ENCODE measurements at regions of chr6 and their contacts with region 1.

Region 1: DNA sequence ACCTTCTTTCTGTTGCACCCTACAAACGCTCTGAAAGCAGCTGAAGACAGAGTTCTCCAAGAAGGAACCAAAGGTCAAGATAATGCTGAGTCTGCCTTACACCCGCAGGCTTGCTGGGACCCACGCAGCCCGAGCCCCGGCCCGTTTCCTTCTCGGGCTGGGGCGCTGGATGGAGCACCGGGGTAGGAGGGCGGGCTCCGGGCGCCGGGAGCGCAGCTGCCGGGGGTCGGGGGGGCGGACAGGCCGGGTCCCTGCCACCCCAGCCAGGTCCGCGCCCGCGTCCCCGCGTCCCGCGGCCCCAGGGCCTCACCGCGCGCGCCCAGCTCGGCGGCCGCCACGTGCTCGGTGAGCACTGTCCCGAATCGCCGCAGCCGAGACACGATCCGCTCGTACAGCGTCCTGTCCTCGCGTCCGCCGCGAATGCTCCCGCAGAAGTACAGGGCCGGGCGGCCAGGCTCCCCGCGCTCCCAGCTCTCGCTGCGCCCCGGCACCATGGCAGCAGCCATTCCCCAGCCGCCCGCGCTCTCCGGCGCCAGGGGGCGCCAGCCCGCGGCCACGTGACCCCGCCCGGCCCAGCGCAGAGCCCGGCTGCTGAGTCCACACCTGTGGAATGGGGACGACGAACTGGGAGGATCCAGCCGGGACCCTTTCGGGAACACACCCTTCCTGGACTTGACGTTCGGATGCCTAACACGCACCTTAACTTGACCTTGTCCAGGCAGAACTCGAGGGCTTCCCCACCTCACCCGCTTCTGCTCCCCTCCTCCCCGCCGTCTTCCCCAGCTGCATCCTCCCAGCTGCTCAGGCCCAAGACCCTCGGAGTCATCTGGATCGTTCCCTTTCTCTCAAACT is at the start of gene DNPH1:
- DNase-seq: peak; percentile 83
- H3K4me3 Mint-ChIP-seq: peak within 1 kb of the TSS; percentile 84
- H3K27ac Mint-ChIP-seq: peak within 1 kb of the TSS; percentile 83
- H3K4me1 Mint-ChIP-seq: peaks cover 43% of the 10 kb centered on the region
- H3K27me3 Mint-ChIP-seq: peaks cover 9% of the 10 kb centered on the region
- total RNA-seq, gene DNPH1: 39.6 to 42.5 TPM

Region 2: DNA sequence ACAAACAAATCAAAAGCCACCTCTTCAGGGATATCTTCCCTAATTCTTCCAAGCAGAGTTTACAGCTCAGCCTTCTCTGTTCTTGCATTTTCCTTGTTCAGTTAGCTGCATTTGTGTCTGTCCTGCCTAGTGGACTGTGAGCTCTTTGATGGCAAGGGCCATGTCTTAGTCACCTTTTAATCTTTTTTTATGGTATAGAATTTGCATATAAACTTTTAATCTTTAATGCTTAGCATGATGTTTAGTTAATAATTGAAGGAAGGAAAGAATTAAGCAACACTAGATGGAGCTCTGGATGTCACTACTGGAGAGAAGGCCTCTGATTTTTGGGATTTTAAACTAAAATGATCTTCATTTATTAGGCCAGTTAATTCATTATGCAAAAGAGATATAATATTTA is 232.7 kb before region 1 on chr6:
- CTCF ChIA-PET with region 1: no interaction called
- POLR2A ChIA-PET with region 1: no interaction called
- DNase-seq: no peak
- H3K4me3 Mint-ChIP-seq: no peak overlapping the region
- H3K27ac Mint-ChIP-seq: no peak overlapping the region
- H3K4me1 Mint-ChIP-seq: peaks cover 7% of the 10 kb centered on the region
- H3K27me3 Mint-ChIP-seq: no peaks in the 10 kb centered on the region

Region 3: GRCh38 chr6:43174263-43175112 is 54.7 kb before region 1 on chr6:
- CTCF ChIA-PET with region 1: interaction called, 15 read pairs
- POLR2A ChIA-PET with region 1: interaction called, 21 read pairs
- DNase-seq: peak; percentile 98
- H3K4me3 Mint-ChIP-seq: peak overlapping the region; percentile 95
- H3K27ac Mint-ChIP-seq: peak overlapping the region; percentile 87
- H3K4me1 Mint-ChIP-seq: peaks cover 51% of the 10 kb centered on the region
- H3K27me3 Mint-ChIP-seq: no peaks in the 10 kb centered on the region

Region 4: GRCh38 chr6:43199912-43200311 is 29.3 kb before region 1 on chr6:
- CTCF ChIA-PET with region 1: interaction called, 11 read pairs
- POLR2A ChIA-PET with region 1: no interaction called
- DNase-seq: no peak
- H3K4me3 Mint-ChIP-seq: no peak overlapping the region
- H3K27ac Mint-ChIP-seq: no peak overlapping the region
- H3K4me1 Mint-ChIP-seq: no peaks in the 10 kb centered on the region
- H3K27me3 Mint-ChIP-seq: no peaks in the 10 kb centered on the region

Region 5: GRCh38 chr6:43369174-43370022 is 140.2 kb after region 1 on chr6 and contains the start of gene ZNF318:
- CTCF ChIA-PET with region 1: interaction called, 4 read pairs
- POLR2A ChIA-PET with region 1: interaction called, 13 read pairs
- DNase-seq: peak; percentile 95
- H3K4me3 Mint-ChIP-seq: peak within 1 kb of the TSS; percentile 84
- H3K27ac Mint-ChIP-seq: peak within 1 kb of the TSS; percentile 90
- H3K4me1 Mint-ChIP-seq: peaks cover 27% of the 10 kb centered on the region
- H3K27me3 Mint-ChIP-seq: peaks cover 3% of the 10 kb centered on the region
- total RNA-seq, gene ZNF318: 16.2 to 16.9 TPM

Region 6: DNA sequence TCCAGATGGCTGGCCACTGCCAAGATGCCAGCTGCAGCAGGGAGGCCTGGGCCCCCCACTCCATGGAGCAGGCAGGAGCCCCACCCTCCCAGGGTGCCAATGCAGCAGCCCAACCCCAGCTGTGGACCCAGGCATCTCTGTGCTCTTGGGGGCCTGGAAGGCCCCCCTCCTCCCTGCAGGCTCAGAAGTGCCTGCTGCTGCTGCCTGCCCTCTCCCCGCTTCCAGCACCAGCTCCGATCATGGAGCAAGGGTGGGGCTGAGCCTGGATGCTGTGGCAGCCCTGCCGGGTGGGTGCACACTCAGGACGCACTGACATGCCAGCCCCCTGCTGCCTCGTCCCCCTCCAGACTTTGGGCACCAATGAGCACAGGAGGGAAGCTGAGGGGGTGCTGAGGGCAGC is 183.4 kb after region 1 on chr6:
- CTCF ChIA-PET with region 1: no interaction called
- POLR2A ChIA-PET with region 1: no interaction called
- DNase-seq: no peak
- H3K4me3 Mint-ChIP-seq: no peak overlapping the region
- H3K27ac Mint-ChIP-seq: no peak overlapping the region
- H3K4me1 Mint-ChIP-seq: no peaks in the 10 kb centered on the region
- H3K27me3 Mint-ChIP-seq: peaks cover 18% of the 10 kb centered on the region

Region 7: DNA sequence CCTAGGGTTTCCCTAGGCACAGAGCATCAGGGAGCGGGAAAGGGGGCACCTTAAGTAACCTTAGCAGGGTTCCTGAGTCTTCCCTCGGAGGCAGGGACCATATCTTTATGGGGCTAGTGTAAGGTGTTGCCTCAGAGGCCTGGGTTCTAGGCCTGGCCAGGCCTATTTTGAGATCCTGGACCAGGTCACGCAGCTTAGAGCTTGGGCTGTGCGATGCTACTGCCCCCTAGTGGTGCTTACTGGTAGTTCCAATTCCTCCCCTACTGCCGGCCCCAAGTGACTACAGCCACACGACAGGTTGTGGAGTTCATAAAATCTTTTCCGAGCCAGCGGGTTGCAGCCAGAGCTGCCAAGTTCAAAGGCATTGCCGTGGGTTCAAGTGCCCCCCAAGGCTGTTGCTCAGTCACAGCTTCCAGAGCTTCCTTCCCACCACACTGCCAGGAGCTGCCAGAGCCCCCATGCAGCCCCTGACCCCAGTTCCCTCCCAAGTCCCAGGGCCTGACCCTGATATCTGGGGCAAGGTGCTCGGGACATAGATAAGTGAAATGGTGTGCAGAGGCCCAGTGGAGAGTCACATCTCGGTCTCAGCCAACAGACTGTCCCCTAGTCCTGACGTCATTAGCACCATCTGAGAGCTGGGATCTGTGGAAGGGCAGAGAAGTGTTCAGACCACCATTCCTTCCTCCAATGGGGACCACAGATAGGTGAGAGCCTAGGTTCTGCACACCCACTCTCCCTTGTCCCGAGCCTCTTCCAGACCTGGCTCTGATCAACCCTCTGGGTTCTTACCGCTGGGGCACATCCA is 277.7 kb after region 1 on chr6:
- CTCF ChIA-PET with region 1: interaction called, 22 read pairs
- POLR2A ChIA-PET with region 1: interaction called, 3 read pairs
- DNase-seq: peak; percentile 83
- H3K4me3 Mint-ChIP-seq: no peak overlapping the region
- H3K27ac Mint-ChIP-seq: no peak overlapping the region
- H3K4me1 Mint-ChIP-seq: peaks cover 16% of the 10 kb centered on the region
- H3K27me3 Mint-ChIP-seq: peaks cover 17% of the 10 kb centered on the region

Measured in activated CD4-positive, alpha-beta memory T cell treated with anti-CD3 and anti-CD28 coated beads, Interleukin-2, amount 10 ng/mL, durations not matched to agents 7 days and 5 days (primary cell).